ENCODE measurements at regions of chr20 and their contacts with region 1.

Region 1: DNA sequence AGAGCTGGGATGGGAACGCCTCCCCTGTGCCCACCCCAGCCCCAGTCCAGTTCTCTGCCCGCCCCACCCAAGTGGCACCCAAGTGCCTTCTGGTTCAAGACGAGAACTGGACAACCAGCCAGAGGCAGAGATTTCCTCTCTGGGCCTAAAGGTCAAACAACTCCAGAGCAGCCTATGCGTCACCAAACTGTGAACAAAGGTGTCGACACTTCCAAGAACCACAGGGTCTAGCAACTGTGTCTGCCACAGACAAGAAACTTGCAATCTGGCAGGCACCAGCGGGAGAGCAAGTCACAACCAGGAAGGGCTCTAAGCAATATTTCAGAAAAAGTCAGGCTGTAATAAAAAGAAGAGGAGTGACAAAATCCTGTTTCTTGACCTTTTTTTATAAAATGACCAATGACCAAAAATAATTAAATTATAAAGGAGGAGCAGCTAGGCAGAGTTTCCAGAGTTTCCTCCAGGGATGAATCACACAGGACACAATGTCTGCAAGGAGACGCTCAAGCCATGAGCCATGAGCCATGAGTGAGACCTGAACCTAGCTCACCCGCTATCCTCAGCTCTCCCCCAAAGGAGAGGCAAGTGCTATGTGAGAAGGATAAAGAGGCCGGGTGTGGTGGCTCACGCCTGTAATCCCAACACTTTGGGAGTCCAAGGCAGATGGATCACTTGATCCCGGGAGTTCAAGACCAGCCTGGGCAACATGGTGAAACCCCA is 11.1 kb downstream of the EDEM2 start:
- DNase-seq: no peak
- ATAC-seq: no peak
- H3K4me3 ChIP-seq: no peak overlapping the region
- H3K4me3 Mint-ChIP-seq: no peak overlapping the region
- H3K27ac ChIP-seq: no peak overlapping the region
- H3K27ac Mint-ChIP-seq: no peak overlapping the region
- H3K4me1 ChIP-seq: no peaks in the 10 kb centered on the region
- H3K4me1 Mint-ChIP-seq: peaks cover 1 to 3% (median 2%) of the 10 kb centered on the region in 3 donors
- H3K27me3 ChIP-seq: no peaks in the 10 kb centered on the region
- H3K27me3 Mint-ChIP-seq: no peaks in the 10 kb centered on the region

Region 2: DNA sequence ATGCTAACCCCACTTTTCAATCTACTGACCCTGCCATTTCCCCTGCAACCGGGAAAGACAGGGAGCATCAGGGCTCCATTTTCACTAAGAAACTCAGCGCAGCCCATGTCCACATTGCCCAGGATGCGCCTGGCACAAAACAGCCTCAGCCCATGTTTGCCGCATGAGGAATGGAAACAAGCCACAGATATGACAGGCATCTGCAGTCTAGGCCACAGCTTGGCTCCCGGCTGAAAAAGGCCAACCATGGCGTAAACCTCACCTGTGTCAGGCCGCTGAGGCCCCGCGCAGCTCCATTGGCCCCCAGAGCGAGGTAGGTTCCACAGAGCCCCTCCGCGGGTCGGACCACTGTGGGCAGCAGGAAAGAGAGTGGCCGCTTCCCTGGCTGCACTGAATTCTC is 285.1 kb before region 1 on chr20:
- CTCF ChIA-PET with region 1: no interaction called
- POLR2A ChIA-PET with region 1: no interaction called
- DNase-seq: no peak
- ATAC-seq: no peak
- H3K4me3 ChIP-seq: no peak overlapping the region
- H3K4me3 Mint-ChIP-seq: no peak overlapping the region
- H3K27ac ChIP-seq: no peak overlapping the region
- H3K27ac Mint-ChIP-seq: no peak overlapping the region
- H3K4me1 ChIP-seq: no peaks in the 10 kb centered on the region
- H3K4me1 Mint-ChIP-seq: no peaks in the 10 kb centered on the region
- H3K27me3 ChIP-seq: no peaks in the 10 kb centered on the region
- H3K27me3 Mint-ChIP-seq: no peaks in the 10 kb centered on the region

Region 3: DNA sequence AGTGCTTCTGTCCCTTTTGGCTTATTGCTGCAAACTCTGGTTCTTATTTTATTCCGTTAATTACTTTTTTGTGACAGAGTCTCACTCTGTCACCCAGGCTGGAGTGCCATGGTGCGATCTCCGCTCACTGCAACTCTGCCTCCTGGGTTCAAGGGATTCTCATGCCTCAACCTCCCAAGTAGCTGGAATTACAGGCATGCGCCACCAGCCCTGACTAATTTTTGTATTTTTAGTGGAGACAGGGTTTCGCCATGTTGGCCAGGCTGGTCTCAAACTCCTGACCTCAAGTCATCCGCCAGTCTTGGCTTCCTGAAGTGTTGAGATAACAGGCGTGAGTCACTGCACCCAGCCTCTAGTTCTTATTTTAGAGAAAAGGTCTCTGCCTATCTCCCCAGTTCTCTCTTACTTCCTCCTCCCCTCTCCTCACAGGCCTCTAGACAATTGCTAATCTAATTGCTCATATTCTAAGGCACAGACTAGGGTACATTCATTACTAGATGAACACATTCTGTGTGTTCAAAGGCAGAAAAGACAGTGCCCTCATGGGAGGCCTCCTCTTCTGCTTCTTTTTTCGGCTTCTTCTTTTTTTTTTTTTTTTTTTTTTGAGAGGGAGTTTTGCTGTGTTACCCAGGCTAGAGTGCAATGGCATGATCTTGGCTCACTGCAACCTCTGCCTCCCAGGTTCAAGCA is 15.9 kb before region 1 on chr20:
- CTCF ChIA-PET with region 1: no interaction called
- POLR2A ChIA-PET with region 1: no interaction called
- DNase-seq: no peak
- ATAC-seq: no peak
- H3K4me3 ChIP-seq: no peak overlapping the region
- H3K4me3 Mint-ChIP-seq: no peak overlapping the region
- H3K27ac ChIP-seq: no peak overlapping the region
- H3K27ac Mint-ChIP-seq: peak overlapping the region; percentile 28 to 34
- H3K4me1 ChIP-seq: no peaks in the 10 kb centered on the region
- H3K4me1 Mint-ChIP-seq: no peaks in the 10 kb centered on the region
- H3K27me3 ChIP-seq: no peaks in the 10 kb centered on the region
- H3K27me3 Mint-ChIP-seq: no peaks in the 10 kb centered on the region

Region 4: GRCh38 chr20:35181731-35182130 is 45.7 kb after region 1 on chr20:
- CTCF ChIA-PET with region 1: no interaction called
- POLR2A ChIA-PET with region 1: interaction called in 1 of 2 experiments, 12 read pairs
- DNase-seq: no peak
- ATAC-seq: no peak
- H3K4me3 ChIP-seq: no peak overlapping the region
- H3K4me3 Mint-ChIP-seq: no peak overlapping the region
- H3K27ac ChIP-seq: no peak overlapping the region
- H3K27ac Mint-ChIP-seq: no peak overlapping the region
- H3K4me1 ChIP-seq: no peaks in the 10 kb centered on the region
- H3K4me1 Mint-ChIP-seq: no peaks in the 10 kb centered on the region
- H3K27me3 ChIP-seq: no peaks in the 10 kb centered on the region
- H3K27me3 Mint-ChIP-seq: no peaks in the 10 kb centered on the region

Region 5: GRCh38 chr20:35344354-35344837 is 208.4 kb after region 1 on chr20:
- CTCF ChIA-PET with region 1: no interaction called
- POLR2A ChIA-PET with region 1: no interaction called
- DNase-seq: peak in 2 of 35 experiments; percentile 5 to 6
- ATAC-seq: no peak
- H3K4me3 ChIP-seq: no peak overlapping the region
- H3K4me3 Mint-ChIP-seq: no peak overlapping the region
- H3K27ac ChIP-seq: no peak overlapping the region
- H3K27ac Mint-ChIP-seq: no peak overlapping the region
- H3K4me1 ChIP-seq: no peaks in the 10 kb centered on the region
- H3K4me1 Mint-ChIP-seq: no peaks in the 10 kb centered on the region
- H3K27me3 ChIP-seq: no peaks in the 10 kb centered on the region
- H3K27me3 Mint-ChIP-seq: no peaks in the 10 kb centered on the region